ENCODE measurements at regions of chr7 and their contacts with region 1.

Region 1: DNA sequence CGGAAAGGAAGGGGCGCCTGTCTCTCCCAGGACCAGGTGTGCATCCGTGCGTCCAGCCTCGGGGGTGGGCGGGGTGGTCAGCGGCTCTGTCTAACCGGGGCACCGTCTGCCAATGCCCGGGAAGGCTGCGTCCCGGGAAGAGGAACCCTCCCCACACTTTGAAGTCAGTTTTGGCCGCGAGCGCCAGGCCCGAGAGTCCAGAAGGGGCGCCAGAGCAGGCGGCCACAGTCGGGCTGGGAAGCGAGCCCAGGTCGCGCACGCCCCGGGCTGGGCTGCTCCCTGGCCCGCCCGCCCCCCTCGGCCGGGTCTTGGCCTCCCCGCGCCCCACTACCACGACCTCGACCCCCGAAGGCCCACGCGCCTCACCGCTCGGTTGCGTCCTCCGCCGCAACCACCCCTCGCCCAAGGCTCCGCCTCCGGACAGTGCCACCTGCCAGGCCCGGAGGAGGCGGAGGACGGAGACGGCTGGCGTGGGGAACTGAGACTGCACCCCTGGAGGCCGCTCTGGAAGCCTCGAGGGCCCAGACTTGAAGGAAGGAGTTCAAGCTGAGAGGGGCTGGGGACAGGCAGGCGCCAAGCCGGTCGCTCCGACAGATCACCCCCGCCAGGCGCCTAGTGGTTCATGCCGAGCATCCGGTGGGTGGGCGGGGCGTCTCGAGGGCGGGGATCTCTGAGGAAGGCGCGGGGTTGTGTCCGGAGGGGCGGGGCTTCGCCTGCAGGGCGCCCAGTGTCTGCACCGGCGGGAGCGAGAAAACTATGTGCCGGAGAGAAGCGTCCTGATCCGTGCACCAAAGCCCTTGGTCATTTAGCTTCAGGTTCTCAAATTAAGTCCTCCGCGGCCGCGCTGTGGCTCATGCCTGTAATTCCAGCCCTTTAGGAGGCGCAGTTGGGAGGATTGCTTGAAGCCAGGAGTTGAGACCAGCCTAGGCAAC is at the start of gene BRAT1:
- DNase-seq: peak; percentile 95
- ATAC-seq: peak; percentile 87
- H3K4me3 ChIP-seq: peak within 1 kb of the TSS; percentile 47 to 87 (median 81)
- H3K4me3 Mint-ChIP-seq: peak within 1 kb of the TSS; percentile 90
- H3K27ac ChIP-seq: peak within 1 kb of the TSS; percentile 96 to 100
- H3K27ac Mint-ChIP-seq: peak within 1 kb of the TSS; percentile 96
- H3K4me1 ChIP-seq: peaks cover 26 to 34% of the 10 kb centered on the region in 2 donors
- H3K4me1 Mint-ChIP-seq: peaks cover 38% of the 10 kb centered on the region
- H3K27me3 ChIP-seq: no peaks in the 10 kb centered on the region
- H3K27me3 Mint-ChIP-seq: no peaks in the 10 kb centered on the region
- CTCF ChIP-seq: peak; percentile 59
- total RNA-seq, gene BRAT1: 36.8 and 40.7 TPM in 2 replicates

Region 2: DNA sequence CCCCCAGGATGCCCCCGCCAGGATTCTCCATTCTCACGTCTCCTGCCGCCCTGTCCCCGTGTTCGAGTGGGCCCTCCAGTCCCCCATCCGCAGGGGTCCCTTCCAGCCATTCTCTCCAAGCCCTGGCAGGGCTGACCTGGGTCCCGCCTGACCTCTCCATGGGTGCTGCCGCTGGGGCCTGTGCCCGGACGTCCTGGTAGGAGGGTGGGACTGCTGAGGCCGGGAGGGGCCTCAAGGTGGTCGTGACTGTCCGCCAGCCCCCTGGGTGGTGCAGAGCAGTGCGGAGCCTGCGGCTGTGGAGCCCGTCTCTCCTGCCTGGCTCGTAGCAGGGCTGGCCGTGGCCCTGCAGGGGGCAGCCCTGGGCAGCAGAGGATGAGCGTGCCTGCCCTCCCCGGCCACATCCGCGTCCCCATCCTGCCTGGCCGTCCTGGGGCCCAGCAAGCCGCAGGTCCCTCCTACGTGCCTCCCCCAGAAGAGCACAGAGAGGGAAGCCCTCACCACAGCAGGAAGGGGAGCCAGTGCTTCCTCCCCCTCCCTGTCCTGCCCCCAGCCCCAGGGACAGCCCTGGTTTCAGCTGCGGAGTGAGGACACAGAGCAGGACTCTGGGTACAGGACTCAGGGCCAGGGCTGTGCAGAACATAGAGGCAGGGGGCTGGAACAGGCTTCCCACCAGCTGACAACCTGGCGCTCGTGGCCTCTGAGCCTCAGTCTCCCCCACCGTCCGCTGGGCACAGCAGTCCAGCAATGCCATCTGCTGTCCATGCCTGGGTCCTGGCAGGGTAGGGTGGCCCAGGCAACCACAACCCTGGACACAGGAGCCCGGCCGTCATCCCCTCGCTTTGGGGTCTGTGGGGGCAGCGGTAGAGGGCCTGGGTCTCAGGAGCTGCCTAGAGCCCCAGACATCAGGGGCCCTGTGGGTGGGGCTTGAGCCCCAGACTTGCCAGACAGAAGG is 77.7 kb before region 1 on chr7:
- CTCF ChIA-PET with region 1: interaction called, 4 read pairs
- POLR2A ChIA-PET with region 1: no interaction called
- intact Hi-C with region 1: loop called (anchors 5 kb)
- DNase-seq: peak; percentile 78
- ATAC-seq: peak; percentile 99
- H3K4me3 ChIP-seq: peak overlapping the region in 3 of 5 experiments; percentile 5 to 21 (median 12)
- H3K4me3 Mint-ChIP-seq: peak overlapping the region; percentile 47
- H3K27ac ChIP-seq: no peak overlapping the region
- H3K27ac Mint-ChIP-seq: no peak overlapping the region
- H3K4me1 ChIP-seq: peaks cover 14 to 17% of the 10 kb centered on the region in 2 donors
- H3K4me1 Mint-ChIP-seq: peaks cover 12% of the 10 kb centered on the region
- H3K27me3 ChIP-seq: peaks cover 0 to 4% (median 2%) of the 10 kb centered on the region in 4 experiments
- H3K27me3 Mint-ChIP-seq: no peaks in the 10 kb centered on the region
- CTCF ChIP-seq: peak; percentile 72

Region 3: DNA sequence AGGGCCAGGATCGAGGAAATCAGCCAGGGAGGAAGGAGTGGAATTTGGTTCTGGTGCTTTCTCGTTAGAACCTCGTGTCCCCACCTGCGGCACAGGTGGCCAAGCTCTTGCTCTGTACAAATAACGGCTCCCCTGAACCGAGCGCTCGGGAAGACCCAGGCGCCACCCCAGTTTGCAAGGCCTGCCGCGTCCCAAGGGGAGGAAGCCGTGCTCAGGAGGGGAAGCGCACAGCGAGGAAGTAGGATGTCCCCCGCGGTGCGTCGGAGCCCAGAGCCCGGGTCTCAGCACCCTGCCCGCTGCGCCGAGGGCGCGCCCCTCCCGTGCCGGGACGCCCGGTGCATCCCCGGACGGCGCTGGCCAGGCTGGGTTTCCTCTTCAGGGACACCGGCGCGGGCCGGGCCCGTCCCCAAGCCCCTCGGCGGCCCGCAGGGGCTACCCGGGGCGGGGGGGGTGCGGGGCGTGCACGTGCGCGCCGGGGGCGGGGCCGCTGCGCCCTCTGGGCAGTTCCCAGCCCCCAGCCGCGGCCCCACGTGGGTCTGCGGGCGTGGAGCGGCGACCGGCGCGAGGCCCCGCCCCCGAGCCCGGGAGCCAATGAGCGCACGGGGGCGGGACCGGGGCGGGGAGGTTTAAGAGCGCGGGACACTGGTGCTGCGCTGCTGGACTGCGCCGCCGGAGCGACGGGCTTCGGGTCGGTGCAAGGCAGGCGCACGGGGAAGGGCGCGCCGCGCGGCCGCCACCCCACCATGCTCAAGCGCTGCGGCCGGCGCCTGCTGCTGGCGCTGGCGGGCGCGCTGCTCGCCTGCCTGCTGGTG is 36.1 kb before region 1 on chr7 and contains the start of gene LFNG:
- CTCF ChIA-PET with region 1: interaction called, 4 read pairs
- POLR2A ChIA-PET with region 1: interaction called, 3 read pairs
- intact Hi-C with region 1: loop called (anchors 1 kb)
- DNase-seq: peak; percentile 94
- ATAC-seq: peak; percentile 80
- H3K4me3 ChIP-seq: peak within 1 kb of the TSS; percentile 84 to 100 (median 97)
- H3K4me3 Mint-ChIP-seq: peak within 1 kb of the TSS; percentile 99
- H3K27ac ChIP-seq: peak within 1 kb of the TSS; percentile 62 to 75
- H3K27ac Mint-ChIP-seq: peak within 1 kb of the TSS; percentile 96
- H3K4me1 ChIP-seq: peaks cover 40 to 49% of the 10 kb centered on the region in 2 donors
- H3K4me1 Mint-ChIP-seq: peaks cover 52% of the 10 kb centered on the region
- H3K27me3 ChIP-seq: no peaks in the 10 kb centered on the region
- H3K27me3 Mint-ChIP-seq: no peaks in the 10 kb centered on the region
- CTCF ChIP-seq: no peak
- total RNA-seq, gene LFNG: 208 and 221 TPM in 2 replicates

Region 4: DNA sequence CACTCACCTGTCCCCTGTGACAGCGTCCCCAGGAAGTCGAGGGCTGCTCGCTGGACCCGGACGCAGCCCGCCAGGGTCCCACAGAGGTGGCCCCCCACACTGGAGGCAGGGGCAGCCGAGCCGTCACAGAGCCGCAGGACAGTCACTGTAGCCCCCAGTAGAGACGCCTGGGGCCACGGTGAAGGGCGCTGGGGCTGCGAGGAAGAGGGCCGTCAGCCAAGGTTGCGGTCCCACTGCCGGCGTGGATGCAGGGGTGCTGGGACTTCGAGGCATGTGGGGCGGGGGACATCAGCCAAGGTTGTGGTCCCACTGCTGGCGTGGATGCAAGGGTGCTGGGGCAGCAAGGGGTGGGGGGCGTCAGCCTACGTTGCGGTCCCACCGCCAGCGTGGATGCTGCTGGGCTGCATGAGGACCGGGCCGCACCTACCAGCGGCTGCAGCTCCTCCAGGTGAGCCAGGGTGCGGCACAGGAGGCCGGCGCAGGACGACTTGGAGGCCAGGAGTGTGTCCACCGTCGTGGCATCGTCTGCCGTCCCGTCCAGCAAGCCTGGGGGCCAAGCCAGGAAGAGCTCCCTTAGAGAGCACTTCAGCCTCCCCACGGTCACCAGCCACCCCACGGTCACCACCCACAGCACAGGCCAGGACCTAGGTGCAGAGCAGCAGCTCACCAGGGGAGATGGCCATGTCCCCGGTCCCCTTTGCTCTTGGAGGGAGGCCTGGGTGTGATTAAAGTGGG is 13.9 kb before region 1 on chr7:
- CTCF ChIA-PET with region 1: interaction called, 5 read pairs
- POLR2A ChIA-PET with region 1: interaction called, 12 read pairs
- intact Hi-C with region 1: no loop called
- DNase-seq: peak; percentile 20
- ATAC-seq: no peak
- H3K4me3 ChIP-seq: no peak overlapping the region
- H3K4me3 Mint-ChIP-seq: no peak overlapping the region
- H3K27ac ChIP-seq: no peak overlapping the region
- H3K27ac Mint-ChIP-seq: no peak overlapping the region
- H3K4me1 ChIP-seq: peaks cover 0 to 9% of the 10 kb centered on the region in 2 donors
- H3K4me1 Mint-ChIP-seq: peaks cover 8% of the 10 kb centered on the region
- H3K27me3 ChIP-seq: no peaks in the 10 kb centered on the region
- H3K27me3 Mint-ChIP-seq: no peaks in the 10 kb centered on the region
- CTCF ChIP-seq: no peak

Region 5: DNA sequence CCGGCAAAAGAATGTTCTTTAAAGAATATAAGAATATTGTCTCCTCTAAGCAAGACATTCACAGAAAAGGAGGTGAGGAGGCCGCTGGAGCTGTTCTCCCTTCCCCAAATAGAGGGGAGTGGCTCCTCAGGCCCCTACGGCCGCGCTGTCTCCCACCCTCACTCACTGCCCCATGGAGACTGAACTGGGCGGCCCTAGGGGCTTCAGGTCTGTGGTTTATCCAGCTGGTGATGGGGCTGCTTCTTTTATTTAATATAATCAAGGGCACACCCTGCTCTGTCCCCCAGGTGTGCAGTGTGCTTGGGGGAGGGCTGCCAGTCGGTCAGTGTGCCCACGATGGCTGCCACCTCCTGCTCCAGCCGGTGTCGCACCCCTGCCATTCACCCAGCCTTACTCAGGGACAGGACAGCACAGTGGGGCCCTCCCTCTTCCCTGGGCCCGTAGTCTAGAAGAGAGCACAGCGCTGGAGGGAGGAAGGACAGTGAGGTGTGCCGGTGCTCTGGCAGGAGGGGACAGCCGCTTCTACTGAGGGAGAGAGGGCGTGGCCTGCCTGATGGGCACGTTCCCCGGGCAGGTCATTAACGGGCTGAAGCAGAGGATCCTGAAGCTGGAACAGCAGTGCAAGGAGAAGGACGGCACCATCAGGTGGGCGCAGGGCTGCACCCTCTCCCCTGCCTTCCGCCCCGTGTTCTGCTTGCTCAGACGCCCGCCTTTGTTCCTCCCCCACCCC is 26.8 kb after region 1 on chr7:
- CTCF ChIA-PET with region 1: no interaction called
- POLR2A ChIA-PET with region 1: no interaction called
- intact Hi-C with region 1: no loop called
- DNase-seq: no peak
- ATAC-seq: no peak
- H3K4me3 ChIP-seq: no peak overlapping the region
- H3K4me3 Mint-ChIP-seq: no peak overlapping the region
- H3K27ac ChIP-seq: no peak overlapping the region
- H3K27ac Mint-ChIP-seq: no peak overlapping the region
- H3K4me1 ChIP-seq: no peaks in the 10 kb centered on the region
- H3K4me1 Mint-ChIP-seq: peaks cover 2% of the 10 kb centered on the region
- H3K27me3 ChIP-seq: no peaks in the 10 kb centered on the region
- H3K27me3 Mint-ChIP-seq: no peaks in the 10 kb centered on the region
- CTCF ChIP-seq: no peak

Region 6: GRCh38 chr7:2632733-2633537 is 77.5 kb after region 1 on chr7:
- CTCF ChIA-PET with region 1: no interaction called
- POLR2A ChIA-PET with region 1: interaction called, 6 read pairs
- intact Hi-C with region 1: loop called (anchors 1 kb)
- DNase-seq: peak; percentile 68
- ATAC-seq: no peak
- H3K4me3 ChIP-seq: peak overlapping the region; percentile 40 to 97 (median 82)
- H3K4me3 Mint-ChIP-seq: peak overlapping the region; percentile 92
- H3K27ac ChIP-seq: peak overlapping the region; percentile 68 to 71
- H3K27ac Mint-ChIP-seq: peak overlapping the region; percentile 91
- H3K4me1 ChIP-seq: peaks cover 33 to 52% of the 10 kb centered on the region in 2 donors
- H3K4me1 Mint-ChIP-seq: peaks cover 44% of the 10 kb centered on the region
- H3K27me3 ChIP-seq: no peaks in the 10 kb centered on the region
- H3K27me3 Mint-ChIP-seq: no peaks in the 10 kb centered on the region
- CTCF ChIP-seq: no peak

Region 7: DNA sequence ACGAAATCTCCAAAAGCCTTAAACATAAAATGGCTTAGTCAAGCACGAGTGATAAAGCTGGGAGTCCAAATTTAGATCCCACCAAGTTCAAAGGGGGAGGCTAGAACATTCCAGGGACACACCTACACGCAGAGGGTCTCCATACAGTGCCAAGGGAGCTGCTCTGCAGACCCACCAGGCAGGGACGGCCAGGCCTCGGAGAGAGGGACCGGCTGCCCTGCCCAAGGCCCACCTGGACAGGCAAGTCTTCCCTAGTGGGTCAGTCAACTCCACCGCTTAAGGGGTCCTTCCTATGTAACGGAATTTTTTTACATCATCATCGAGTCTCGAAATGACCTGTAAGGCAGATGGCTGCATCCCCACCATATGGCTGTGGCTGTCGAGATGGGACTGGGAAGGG is 161.1 kb after region 1 on chr7:
- CTCF ChIA-PET with region 1: no interaction called
- POLR2A ChIA-PET with region 1: no interaction called
- intact Hi-C with region 1: no loop called
- DNase-seq: no peak
- ATAC-seq: no peak
- H3K4me3 ChIP-seq: no peak overlapping the region
- H3K4me3 Mint-ChIP-seq: peak overlapping the region; percentile 64
- H3K27ac ChIP-seq: no peak overlapping the region
- H3K27ac Mint-ChIP-seq: peak overlapping the region; percentile 94
- H3K4me1 ChIP-seq: peaks cover 54 to 74% of the 10 kb centered on the region in 2 donors
- H3K4me1 Mint-ChIP-seq: peaks cover 79% of the 10 kb centered on the region
- H3K27me3 ChIP-seq: no peaks in the 10 kb centered on the region
- H3K27me3 Mint-ChIP-seq: no peaks in the 10 kb centered on the region
- CTCF ChIP-seq: no peak

Region 8: DNA sequence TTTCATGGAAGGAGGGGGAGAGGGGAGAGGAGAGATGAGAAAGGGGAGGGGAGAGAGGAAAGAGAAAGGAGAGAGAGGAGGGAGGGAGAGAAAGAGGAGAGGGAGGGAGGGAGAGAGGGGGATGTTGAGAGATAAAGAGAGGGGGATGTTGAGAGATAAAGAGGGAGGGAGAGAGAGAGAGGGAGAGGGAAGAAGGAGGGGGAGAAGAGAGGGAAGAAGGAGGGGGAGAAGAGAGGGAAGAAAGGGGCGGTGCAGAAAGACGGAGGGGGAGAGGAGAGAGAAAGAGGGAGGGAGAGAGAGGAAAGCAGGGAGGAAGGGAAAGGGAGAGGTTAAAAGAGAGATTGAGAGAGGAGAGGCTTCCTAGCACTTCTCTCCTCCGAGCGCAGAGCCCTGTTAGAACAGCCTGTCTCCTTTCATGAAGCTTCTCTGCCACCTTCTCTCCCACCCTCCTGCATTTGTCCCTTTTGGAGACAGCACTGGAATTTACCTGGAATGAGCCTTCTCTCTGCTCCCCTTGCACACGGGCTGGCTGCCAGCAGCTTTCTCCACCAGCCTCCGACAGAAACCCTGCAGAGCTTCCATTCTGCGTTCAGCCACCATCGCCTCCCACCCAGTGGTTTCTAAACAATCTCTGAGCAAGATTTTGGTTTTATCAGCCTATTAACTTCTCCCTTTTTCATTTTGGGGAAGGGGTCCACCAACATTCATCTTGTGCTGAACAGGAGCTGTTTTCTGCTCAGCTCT is 562.3 kb after region 1 on chr7:
- CTCF ChIA-PET with region 1: no interaction called
- POLR2A ChIA-PET with region 1: no interaction called
- intact Hi-C with region 1: no loop called
- DNase-seq: no peak
- ATAC-seq: no peak
- H3K4me3 ChIP-seq: peak overlapping the region in 1 of 5 experiments; percentile 18
- H3K4me3 Mint-ChIP-seq: peak overlapping the region; percentile 40
- H3K27ac ChIP-seq: no peak overlapping the region
- H3K27ac Mint-ChIP-seq: no peak overlapping the region
- H3K4me1 ChIP-seq: peaks cover 0 to 9% of the 10 kb centered on the region in 2 donors
- H3K4me1 Mint-ChIP-seq: peaks cover 13% of the 10 kb centered on the region
- H3K27me3 ChIP-seq: peaks cover 0 to 12% (median 3%) of the 10 kb centered on the region in 4 experiments
- H3K27me3 Mint-ChIP-seq: peaks cover 51% of the 10 kb centered on the region
- CTCF ChIP-seq: no peak

Measured in B cell (primary cell).